Activated B cell treated with CpG ODN at 0.5 μM for 24 hours (primary cell): ENCODE measurements at regions of chr3 and their contacts with region 1.

Region 1: GRCh38 chr3:66253790-66254620 is 33.2 kb downstream of the SLC25A26 start:
- DNase-seq: no peak
- ATAC-seq: no peak
- H3K4me3 Mint-ChIP-seq: no peak overlapping the region
- H3K27ac Mint-ChIP-seq: no peak overlapping the region
- H3K4me1 Mint-ChIP-seq: peaks cover 18% of the 10 kb centered on the region
- H3K27me3 Mint-ChIP-seq: no peaks in the 10 kb centered on the region
- CTCF ChIP-seq: peak; percentile 96

Region 2: DNA sequence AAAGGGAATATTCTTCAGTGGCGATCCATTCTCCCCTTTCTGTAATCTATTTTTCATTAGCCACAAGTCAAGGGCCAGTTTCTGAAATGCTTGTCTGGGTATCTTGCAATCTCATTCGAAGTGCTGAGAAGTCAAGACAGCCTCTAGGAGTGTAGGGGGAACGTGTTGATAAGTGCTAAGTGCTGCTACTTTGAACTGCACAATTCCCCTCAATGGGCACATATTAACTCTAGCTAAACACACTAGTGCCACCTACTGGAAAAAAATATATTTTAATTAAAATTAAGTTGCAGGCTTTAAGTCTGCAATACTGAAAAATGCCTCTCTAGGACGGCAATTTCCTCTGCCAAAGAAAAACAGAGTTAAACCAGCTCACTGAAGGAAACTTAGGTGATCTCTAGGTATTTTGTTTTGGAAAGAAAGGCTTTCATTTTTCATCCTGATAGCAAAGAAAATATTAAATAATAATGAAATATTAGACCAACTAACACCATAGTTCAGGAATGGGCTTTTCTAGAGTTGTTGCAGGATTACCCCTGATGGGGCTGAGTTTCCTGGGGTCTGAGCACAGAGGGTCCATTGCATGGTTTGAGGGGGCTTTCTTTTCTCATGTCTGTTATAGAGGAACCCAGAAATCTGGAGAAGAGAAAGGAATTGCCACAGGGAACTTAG is 562.2 kb after region 1 on chr3:
- CTCF ChIA-PET with region 1: interaction called, 204 read pairs
- POLR2A ChIA-PET with region 1: no interaction called
- intact Hi-C with region 1: loop called (anchors 1 kb)
- DNase-seq: no peak
- ATAC-seq: peak; percentile 56
- H3K4me3 Mint-ChIP-seq: no peak overlapping the region
- H3K27ac Mint-ChIP-seq: no peak overlapping the region
- H3K4me1 Mint-ChIP-seq: no peaks in the 10 kb centered on the region
- H3K27me3 Mint-ChIP-seq: peaks cover 5% of the 10 kb centered on the region
- CTCF ChIP-seq: peak; percentile 78

Region 3: DNA sequence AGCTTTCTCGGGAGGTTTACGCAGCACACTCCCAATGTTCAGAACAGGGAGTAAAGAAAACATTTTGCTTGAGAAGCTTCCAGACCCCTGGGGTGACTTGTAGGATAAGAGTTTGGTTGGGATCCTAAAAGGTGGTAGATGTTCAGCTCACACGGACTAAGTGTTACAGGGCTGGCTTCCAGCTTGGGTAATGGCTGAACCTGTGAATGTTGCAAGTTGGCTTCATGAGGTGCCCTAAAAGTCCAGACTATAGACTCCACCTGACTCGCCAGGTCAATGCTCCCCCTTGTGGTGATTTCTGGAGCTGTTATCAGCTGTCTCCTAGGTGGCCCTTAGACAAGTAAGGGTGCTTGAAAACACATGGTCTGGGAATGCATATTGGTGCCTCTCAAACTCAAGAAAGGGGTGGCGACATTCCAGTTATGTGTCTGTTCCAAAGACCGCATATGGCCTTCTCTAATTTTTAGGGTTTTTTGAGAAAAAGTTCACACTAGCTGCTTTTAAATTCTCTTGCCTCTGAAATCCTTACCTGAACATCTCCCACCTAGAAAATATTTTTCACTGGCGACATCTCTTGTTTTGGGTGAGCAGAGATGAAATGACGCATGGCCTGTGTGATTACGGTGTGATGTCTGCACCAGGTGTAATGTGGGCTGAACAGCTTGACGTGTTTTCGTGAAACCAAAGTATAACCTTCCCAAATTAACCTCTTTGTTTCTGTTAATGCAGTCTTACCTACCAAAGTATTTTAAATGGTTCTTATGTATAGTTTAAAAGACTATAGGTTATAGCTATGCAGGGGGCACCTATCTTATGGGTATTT is 568.4 kb after region 1 on chr3:
- CTCF ChIA-PET with region 1: interaction called, 204 read pairs
- POLR2A ChIA-PET with region 1: no interaction called
- intact Hi-C with region 1: loop called (anchors 1 kb)
- DNase-seq: peak; percentile 32
- ATAC-seq: peak; percentile 77
- H3K4me3 Mint-ChIP-seq: no peak overlapping the region
- H3K27ac Mint-ChIP-seq: no peak overlapping the region
- H3K4me1 Mint-ChIP-seq: no peaks in the 10 kb centered on the region
- H3K27me3 Mint-ChIP-seq: peaks cover 3% of the 10 kb centered on the region
- CTCF ChIP-seq: no peak